Activated CD8-positive, alpha-beta T cell treated with anti-CD3 and anti-CD28 coated beads for 36 hours (primary cell): ENCODE measurements at regions of chr9 and their contacts with region 1.

Region 1: GRCh38 chr9:109098171-109098959 is 21.4 kb downstream of the TMEM245 start:
- DNase-seq: no peak
- ATAC-seq: no peak
- H3K4me3 Mint-ChIP-seq: no peak overlapping the region
- H3K27ac Mint-ChIP-seq: peak overlapping the region; percentile 52
- H3K4me1 Mint-ChIP-seq: peaks cover 83% of the 10 kb centered on the region
- H3K27me3 Mint-ChIP-seq: no peaks in the 10 kb centered on the region
- CTCF ChIP-seq: no peak

Region 2: GRCh38 chr9:109039539-109039938 is 58.8 kb before region 1 on chr9:
- CTCF ChIA-PET with region 1: no interaction called
- POLR2A ChIA-PET with region 1: no interaction called
- intact Hi-C with region 1: no loop called
- DNase-seq: no peak
- ATAC-seq: no peak
- H3K4me3 Mint-ChIP-seq: no peak overlapping the region
- H3K27ac Mint-ChIP-seq: no peak overlapping the region
- H3K4me1 Mint-ChIP-seq: no peaks in the 10 kb centered on the region
- H3K27me3 Mint-ChIP-seq: no peaks in the 10 kb centered on the region
- CTCF ChIP-seq: no peak

Region 3: GRCh38 chr9:109119439-109120203 is 21.3 kb after region 1 on chr9 and contains the start of gene TMEM245:
- CTCF ChIA-PET with region 1: interaction called, 4 read pairs
- POLR2A ChIA-PET with region 1: interaction called, 19 read pairs
- intact Hi-C with region 1: no loop called
- DNase-seq: peak; percentile 98
- ATAC-seq: peak; percentile 91
- H3K4me3 Mint-ChIP-seq: peak within 1 kb of the TSS; percentile 91
- H3K27ac Mint-ChIP-seq: peak within 1 kb of the TSS; percentile 92
- H3K4me1 Mint-ChIP-seq: peaks cover 40% of the 10 kb centered on the region
- H3K27me3 Mint-ChIP-seq: no peaks in the 10 kb centered on the region
- CTCF ChIP-seq: no peak
- total RNA-seq, gene TMEM245: 23.3 to 26.7 TPM